HepG2 (cell line): ENCODE measurements at regions of chr5 and their contacts with region 1.

Region 1: DNA sequence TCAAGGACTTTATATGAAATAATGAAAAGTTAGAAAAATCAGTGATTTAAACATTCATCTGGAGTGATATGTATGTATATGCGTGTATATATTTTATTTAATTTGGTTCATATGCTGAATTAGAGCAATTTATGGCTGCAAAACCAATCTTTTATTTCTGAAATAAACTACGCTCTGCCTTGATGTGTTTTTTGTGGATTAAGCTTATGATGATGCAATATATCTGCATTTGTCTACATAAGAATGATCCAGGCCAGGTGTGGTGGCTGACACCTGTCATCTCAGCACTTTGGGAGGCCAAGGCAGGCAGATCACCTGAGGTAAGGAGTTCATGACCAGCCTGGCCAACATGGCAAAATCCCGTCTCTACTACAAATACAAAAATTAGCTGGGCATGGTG is 1842.3 kb upstream of the CDH6 start:
- DNase-seq: no peak
- ATAC-seq: no peak
- H3K4me3 ChIP-seq: no peak overlapping the region
- H3K27ac ChIP-seq: no peak overlapping the region
- H3K4me1 ChIP-seq: no peaks in the 10 kb centered on the region
- H3K27me3 ChIP-seq: no peaks in the 10 kb centered on the region
- CTCF ChIP-seq: no peak
- EP300 ChIP-seq: no peak
- POLR2A ChIP-seq: no peak
- RAD21 ChIP-seq: no peak

Region 2: DNA sequence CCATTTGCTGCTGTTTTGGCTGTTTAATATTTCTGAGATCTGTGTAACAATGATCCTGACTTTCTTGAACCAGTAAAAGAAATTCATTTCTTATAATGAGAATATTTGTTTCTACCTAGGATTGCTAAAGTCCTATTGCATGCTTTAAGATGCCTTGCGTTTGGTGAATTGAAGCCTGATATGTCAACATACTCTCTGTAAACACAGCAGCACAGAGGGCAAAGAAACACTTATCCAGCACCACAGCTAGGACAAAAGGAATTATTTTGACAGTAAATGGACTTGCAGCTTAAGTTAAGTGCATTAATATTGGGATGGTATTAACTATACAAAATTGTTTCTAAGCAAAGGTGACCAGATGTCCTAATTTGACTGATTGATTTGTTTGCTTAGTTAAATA is 188.9 kb before region 1 on chr5:
- CTCF ChIA-PET with region 1: no interaction called
- POLR2A ChIA-PET with region 1: no interaction called
- in situ Hi-C with region 1: no loop called
- intact Hi-C with region 1: no loop called
- DNase-seq: peak; percentile 3
- ATAC-seq: peak; percentile 46; the same call in 1 of the 3 replicates
- H3K4me3 ChIP-seq: no peak overlapping the region
- H3K27ac ChIP-seq: no peak overlapping the region
- H3K4me1 ChIP-seq: peaks cover 11% of the 10 kb centered on the region
- H3K27me3 ChIP-seq: no peaks in the 10 kb centered on the region
- CTCF ChIP-seq: no peak
- EP300 ChIP-seq: no peak
- POLR2A ChIP-seq: no peak
- RAD21 ChIP-seq: no peak

Region 3: DNA sequence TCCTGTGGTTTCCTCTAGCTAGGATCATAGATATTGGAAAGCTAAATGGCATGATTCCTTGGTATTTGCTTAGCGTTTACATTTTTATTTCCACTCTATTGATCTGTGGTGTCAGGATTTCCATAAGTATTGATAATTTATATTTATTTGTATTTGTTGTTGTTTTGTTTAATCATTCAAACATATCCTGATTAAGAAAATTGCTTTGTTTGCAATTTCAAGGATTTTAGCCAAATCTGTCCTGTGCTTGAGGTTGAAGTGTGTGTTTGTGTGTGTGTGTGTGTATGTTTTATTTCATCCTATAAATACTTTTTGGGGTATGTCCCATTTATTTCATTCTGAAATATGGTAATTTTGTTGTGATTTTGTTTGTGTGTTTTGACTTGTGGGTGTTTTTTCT is 41.8 kb before region 1 on chr5:
- CTCF ChIA-PET with region 1: no interaction called
- POLR2A ChIA-PET with region 1: no interaction called
- in situ Hi-C with region 1: no loop called
- intact Hi-C with region 1: loop called (anchors 1 kb)
- DNase-seq: no peak
- ATAC-seq: no peak
- H3K4me3 ChIP-seq: no peak overlapping the region
- H3K27ac ChIP-seq: no peak overlapping the region
- H3K4me1 ChIP-seq: no peaks in the 10 kb centered on the region
- H3K27me3 ChIP-seq: no peaks in the 10 kb centered on the region
- CTCF ChIP-seq: no peak
- EP300 ChIP-seq: no peak
- POLR2A ChIP-seq: no peak
- RAD21 ChIP-seq: no peak

Region 4: DNA sequence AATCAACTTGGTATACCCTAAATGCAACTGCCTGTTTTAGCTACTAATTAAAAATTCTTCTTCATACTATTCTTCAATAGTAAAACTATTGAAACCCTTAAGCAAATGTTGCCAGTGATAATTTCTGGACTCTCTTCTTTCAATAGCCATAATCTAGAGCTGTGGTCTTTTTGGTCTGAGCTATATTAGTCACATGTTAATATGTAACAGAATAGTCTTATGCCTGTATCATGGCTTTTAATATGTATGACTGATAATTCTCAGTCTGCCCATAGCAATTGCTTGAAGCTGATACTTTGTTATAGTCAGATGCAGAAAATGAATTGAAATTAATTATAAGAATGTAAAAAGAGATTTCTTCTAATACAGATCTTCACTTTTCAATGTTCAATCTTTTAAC is 29.6 kb before region 1 on chr5:
- CTCF ChIA-PET with region 1: no interaction called
- POLR2A ChIA-PET with region 1: no interaction called
- in situ Hi-C with region 1: no loop called
- intact Hi-C with region 1: no loop called
- DNase-seq: no peak
- ATAC-seq: no peak
- H3K4me3 ChIP-seq: no peak overlapping the region
- H3K27ac ChIP-seq: no peak overlapping the region
- H3K4me1 ChIP-seq: no peaks in the 10 kb centered on the region
- H3K27me3 ChIP-seq: no peaks in the 10 kb centered on the region
- CTCF ChIP-seq: no peak
- EP300 ChIP-seq: no peak
- POLR2A ChIP-seq: no peak
- RAD21 ChIP-seq: no peak

Region 5: DNA sequence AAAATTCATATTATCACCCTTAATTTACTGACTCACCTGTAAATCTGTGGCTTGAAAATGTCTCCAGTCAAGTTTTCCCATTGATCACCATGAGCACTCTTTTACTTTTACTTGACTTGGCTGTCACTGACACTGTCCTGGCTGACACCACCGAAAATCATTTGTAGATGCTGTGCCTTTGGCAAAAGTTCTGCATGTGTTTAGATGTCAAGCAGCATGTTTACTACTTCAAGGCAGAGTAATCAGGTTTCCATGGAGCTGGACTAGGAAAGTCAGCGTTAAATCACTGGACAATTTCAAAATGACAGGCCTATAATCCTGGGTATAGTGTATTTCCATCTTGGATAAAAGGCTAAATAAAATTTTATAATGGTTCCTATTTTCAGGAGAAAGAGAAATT is 311.7 kb after region 1 on chr5:
- CTCF ChIA-PET with region 1: no interaction called
- POLR2A ChIA-PET with region 1: no interaction called
- in situ Hi-C with region 1: no loop called
- intact Hi-C with region 1: no loop called
- DNase-seq: no peak
- ATAC-seq: no peak
- H3K4me3 ChIP-seq: no peak overlapping the region
- H3K27ac ChIP-seq: no peak overlapping the region
- H3K4me1 ChIP-seq: no peaks in the 10 kb centered on the region
- H3K27me3 ChIP-seq: no peaks in the 10 kb centered on the region
- CTCF ChIP-seq: no peak
- EP300 ChIP-seq: no peak
- POLR2A ChIP-seq: no peak
- RAD21 ChIP-seq: no peak